Mammary epithelial cell (primary cell): ENCODE measurements at regions of chr9 and their contacts with region 1.

Region 1: GRCh38 chr9:133406480-133407307 is 11.1 kb downstream of the REXO4 start:
- DNase-seq: peak; percentile 58
- H3K4me3 ChIP-seq: no peak overlapping the region
- H3K27ac ChIP-seq: no peak overlapping the region
- H3K4me1 ChIP-seq: no peaks in the 10 kb centered on the region
- H3K27me3 ChIP-seq: no peaks in the 10 kb centered on the region
- CTCF ChIP-seq: peak; percentile 90 to 95

Region 2: GRCh38 chr9:133282464-133283238 is 124.0 kb before region 1 on chr9:
- CTCF ChIA-PET with region 1: no interaction called
- dilution Hi-C with region 1: no loop called
- in situ Hi-C with region 1: no loop called
- intact Hi-C with region 1: no loop called
- DNase-seq: no peak
- H3K4me3 ChIP-seq: no peak overlapping the region
- H3K27ac ChIP-seq: no peak overlapping the region
- H3K4me1 ChIP-seq: no peaks in the 10 kb centered on the region
- H3K27me3 ChIP-seq: peaks cover 3% of the 10 kb centered on the region
- CTCF ChIP-seq: no peak

Region 3: DNA sequence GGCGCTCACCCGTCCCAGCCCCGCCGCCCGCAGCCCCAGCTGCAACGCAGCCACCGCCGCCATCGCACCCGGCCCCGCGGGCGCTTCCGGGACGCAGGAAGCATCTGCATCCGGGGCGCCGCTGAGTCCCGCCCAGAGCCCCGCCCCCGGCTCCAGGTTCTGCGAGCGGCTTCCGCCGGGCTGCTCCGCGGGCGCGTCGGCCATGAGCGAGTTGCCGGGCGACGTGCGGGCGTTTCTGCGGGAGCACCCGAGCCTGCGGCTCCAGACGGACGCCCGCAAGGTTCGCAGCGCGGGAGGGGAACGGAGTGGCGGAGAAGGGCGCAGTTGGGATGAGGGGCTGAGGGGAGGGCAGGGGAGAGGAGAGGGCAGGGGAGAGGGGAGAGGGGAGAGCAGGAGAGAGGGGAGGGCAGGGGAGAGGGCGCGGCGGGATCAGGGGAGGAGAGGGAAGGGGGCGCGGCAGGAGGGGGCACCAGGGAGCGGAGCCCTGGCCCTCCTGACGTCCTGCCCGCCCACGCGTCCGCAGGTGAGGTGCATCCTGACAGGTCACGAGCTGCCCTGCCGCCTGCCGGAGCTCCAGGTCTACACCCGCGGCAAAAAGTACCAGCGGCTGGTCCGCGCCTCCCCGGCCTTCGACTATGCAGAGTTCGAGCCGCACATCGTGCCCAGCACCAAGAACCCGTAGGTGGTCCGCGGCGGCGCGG is 50.2 kb before region 1 on chr9 and contains the starts of genes SURF1 and SURF2:
- CTCF ChIA-PET with region 1: no interaction called
- dilution Hi-C with region 1: no loop called
- in situ Hi-C with region 1: no loop called
- intact Hi-C with region 1: loop called (anchors 2 kb)
- DNase-seq: peak; percentile 76
- H3K4me3 ChIP-seq: peak within 1 kb of the TSS; percentile 66 to 97 (median 70)
- H3K27ac ChIP-seq: peak within 1 kb of the TSS; percentile 40
- H3K4me1 ChIP-seq: peaks cover 16% of the 10 kb centered on the region
- H3K27me3 ChIP-seq: no peaks in the 10 kb centered on the region
- CTCF ChIP-seq: peak; percentile 7 to 40
- total RNA-seq, gene SURF1: 17.5 to 23.4 TPM
- total RNA-seq, gene SURF2: 22.5 to 42.2 TPM

Region 4: DNA sequence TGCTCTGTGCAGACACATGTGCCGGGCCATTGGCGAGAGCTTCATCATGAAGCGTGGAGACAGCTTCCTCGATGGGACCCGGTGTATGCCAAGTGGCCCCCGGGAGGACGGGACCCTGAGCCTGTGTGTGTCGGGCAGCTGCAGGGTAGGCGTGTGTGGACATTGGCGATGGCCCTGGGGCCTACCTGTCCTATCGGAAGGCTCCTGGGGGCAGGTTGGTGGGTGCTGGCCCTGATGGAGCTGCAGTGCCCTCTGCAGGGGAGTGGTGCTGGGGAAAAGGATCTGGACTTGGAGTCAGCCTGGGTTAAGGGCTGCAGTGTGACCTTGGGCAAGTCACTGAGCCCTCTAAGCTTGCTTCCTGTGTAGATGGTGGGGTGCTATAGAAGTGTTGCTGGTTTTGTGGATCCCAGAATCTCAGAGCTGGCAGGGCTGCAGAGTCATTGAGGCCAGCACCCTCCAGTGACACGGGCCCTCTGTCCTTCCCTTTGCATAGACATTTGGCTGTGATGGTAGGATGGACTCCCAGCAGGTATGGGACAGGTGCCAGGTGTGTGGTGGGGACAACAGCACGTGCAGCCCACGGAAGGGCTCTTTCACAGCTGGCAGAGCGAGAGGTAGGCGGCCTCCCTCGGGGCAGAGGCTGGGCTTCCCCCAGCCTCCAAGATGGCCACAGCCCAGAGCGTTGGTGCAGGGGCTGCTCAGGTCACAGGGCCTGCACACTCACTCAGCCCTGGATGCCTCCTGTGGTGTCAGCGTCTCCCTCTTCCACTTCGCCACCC is 31.2 kb after region 1 on chr9:
- CTCF ChIA-PET with region 1: no interaction called
- dilution Hi-C with region 1: no loop called
- in situ Hi-C with region 1: no loop called
- intact Hi-C with region 1: loop called (anchors 1 kb)
- DNase-seq: no peak
- H3K4me3 ChIP-seq: no peak overlapping the region
- H3K27ac ChIP-seq: no peak overlapping the region
- H3K4me1 ChIP-seq: no peaks in the 10 kb centered on the region
- H3K27me3 ChIP-seq: no peaks in the 10 kb centered on the region
- CTCF ChIP-seq: no peak

Region 5: DNA sequence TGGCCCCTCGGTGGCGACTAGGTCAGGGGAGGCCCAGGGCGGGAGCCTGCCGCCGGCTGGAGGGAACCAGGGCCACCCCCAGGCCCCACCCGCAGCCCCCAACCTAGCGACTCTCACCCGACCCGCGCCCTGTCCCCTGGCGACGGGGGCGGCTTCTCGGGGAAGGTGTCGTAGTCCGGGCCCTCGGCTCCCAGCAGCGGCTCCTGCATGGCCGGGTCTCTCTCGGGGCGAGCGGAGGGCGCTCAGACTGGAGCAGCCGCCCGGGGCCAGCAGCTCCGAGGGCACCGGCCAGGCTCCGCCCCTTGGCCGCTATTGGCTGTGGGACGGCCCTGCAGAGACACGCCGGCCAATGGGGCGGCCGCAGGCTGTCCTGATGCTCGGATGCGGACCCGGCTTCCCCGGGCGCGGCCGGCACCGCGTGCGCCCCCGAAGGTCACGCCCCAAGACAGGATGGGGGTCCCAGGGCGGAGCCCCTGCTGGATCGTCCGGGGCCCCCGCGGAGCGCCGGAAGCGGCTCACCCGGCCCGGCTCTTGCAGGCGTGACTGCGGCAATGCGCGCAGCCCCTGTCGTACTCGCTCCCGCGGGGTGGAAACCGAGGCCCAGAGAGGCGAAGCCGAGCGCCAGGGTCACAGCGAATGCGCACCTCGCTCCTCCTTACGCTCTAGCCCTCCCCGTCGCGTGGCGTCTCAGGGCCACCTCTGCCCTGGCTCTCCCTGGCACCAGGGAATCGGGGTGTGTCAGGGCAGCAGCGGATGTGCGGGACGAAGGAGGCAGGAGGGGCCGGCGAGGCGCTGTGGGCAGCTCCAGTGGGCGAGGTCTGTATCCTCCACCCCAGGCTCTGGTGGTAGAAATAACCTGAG is 72.4 kb after region 1 on chr9 and contains the start of gene SLC2A6:
- CTCF ChIA-PET with region 1: no interaction called
- dilution Hi-C with region 1: no loop called
- in situ Hi-C with region 1: no loop called
- intact Hi-C with region 1: loop called (anchors 2 kb)
- DNase-seq: peak; percentile 78
- H3K4me3 ChIP-seq: peak within 1 kb of the TSS; percentile 67 to 84 (median 77)
- H3K27ac ChIP-seq: peak within 1 kb of the TSS; percentile 68
- H3K4me1 ChIP-seq: peaks cover 23% of the 10 kb centered on the region
- H3K27me3 ChIP-seq: no peaks in the 10 kb centered on the region
- CTCF ChIP-seq: no peak
- total RNA-seq, gene SLC2A6: 24.7 to 31.3 TPM

Region 6: DNA sequence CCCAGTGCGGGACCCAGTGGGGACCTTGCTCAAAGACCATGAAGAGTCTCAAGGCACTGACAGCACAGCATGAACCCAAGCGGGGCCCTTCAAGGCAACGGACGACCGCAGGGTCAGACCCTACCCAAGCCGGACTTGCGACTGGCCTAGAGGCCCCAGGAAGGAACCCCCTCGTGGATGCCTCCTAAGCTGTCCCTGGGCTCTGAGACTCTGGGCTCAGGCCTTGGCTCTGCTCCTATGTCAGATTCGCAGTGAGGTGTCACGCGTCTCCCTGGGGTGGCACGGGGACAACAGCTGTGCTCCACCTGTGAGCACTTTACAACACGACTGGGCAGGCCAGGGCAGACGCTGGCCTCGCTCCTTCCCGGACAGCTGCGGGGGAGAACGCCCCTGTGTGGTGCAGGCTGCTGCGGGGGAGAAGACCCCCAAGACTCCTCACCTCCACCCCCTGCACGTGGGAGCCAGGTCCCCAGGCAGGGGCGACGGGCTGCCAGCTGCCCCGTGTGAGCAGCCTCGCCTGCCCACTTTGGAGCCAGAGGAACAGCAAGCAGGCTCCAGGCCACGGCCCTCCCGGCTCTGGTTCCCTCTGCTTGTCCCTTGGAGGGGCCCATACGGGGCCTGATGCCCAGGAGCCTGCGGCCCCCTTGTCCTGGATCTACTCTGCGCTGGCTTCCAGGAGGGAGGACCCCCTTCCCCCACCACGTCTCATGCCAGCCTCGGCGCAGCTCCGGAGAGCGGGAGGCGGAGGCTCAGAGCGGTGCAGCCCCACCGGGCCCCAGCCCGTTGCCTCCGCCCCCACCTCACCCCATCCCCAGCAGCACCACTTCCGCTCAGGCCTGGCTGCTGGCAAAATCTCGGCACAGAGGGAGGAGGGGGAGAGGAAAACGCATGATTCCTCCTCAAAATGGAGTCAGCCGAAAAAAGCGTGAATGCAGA is 295.4 kb after region 1 on chr9:
- CTCF ChIA-PET with region 1: no interaction called
- dilution Hi-C with region 1: no loop called
- in situ Hi-C with region 1: no loop called
- intact Hi-C with region 1: no loop called
- DNase-seq: no peak
- H3K4me3 ChIP-seq: no peak overlapping the region
- H3K27ac ChIP-seq: no peak overlapping the region
- H3K4me1 ChIP-seq: peaks cover 4% of the 10 kb centered on the region
- H3K27me3 ChIP-seq: peaks cover 14% of the 10 kb centered on the region
- CTCF ChIP-seq: no peak

Region 7: DNA sequence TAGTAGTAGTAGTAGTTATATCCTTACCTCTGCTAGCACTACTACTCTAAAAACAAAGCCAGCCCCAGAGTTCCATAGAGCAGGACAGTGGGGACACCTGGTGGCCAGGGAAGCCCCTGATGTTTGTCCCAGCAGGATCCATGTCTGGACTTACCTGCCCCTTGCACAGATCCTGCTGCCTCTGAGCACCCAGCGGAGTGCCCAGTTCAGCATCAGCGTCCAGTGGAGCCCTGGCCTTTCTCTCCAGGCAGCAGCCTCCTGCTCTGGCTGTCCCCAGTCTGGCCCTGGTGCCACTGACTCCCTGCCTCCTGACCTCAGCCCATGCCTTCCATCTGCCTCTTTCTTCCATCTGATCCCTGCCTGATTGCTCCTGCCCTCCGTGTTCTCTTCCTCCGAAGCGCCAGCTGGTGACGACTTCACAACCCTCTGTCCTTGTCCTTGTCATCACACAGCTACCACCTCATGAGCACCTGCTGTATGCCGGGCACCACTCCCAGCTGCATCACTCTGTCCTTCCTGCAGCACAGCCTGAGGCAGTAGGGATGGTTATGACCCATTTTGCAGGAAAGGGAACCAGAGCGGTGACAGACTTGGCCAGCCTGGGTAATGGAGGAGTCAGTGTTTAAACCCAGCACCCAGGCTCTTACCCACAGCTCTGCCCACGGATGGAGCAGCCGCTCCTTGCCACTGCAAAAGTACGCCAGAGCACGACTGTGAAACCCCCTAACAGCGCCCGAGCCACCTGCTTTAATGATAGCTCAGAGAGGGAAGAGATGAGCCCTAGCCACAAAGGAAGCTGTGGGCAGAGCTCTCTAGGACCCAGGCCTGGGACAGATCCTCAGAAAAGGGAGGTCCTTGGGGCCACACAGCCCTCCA is 319.9 kb after region 1 on chr9:
- CTCF ChIA-PET with region 1: no interaction called
- dilution Hi-C with region 1: no loop called
- in situ Hi-C with region 1: no loop called
- intact Hi-C with region 1: loop called (anchors 5 kb)
- DNase-seq: peak; percentile 24
- H3K4me3 ChIP-seq: no peak overlapping the region
- H3K27ac ChIP-seq: no peak overlapping the region
- H3K4me1 ChIP-seq: no peaks in the 10 kb centered on the region
- H3K27me3 ChIP-seq: no peaks in the 10 kb centered on the region
- CTCF ChIP-seq: peak; percentile 30 to 67